ENCODE measurements at regions of chr12 and their contacts with region 1.

Region 1: GRCh38 chr12:111029732-111030131 is 109.4 kb upstream of the MYL2 start:
- DNase-seq: no peak
- ATAC-seq: no peak
- H3K4me3 ChIP-seq: no peak overlapping the region
- H3K27ac ChIP-seq: no peak overlapping the region
- H3K4me1 ChIP-seq: peaks cover 0 to 7% (median 6%) of the 10 kb centered on the region in 9 donors
- H3K27me3 ChIP-seq: peaks cover 9 to 92% (median 83%) of the 10 kb centered on the region in 7 donors
- CTCF ChIP-seq: no peak

Region 2: DNA sequence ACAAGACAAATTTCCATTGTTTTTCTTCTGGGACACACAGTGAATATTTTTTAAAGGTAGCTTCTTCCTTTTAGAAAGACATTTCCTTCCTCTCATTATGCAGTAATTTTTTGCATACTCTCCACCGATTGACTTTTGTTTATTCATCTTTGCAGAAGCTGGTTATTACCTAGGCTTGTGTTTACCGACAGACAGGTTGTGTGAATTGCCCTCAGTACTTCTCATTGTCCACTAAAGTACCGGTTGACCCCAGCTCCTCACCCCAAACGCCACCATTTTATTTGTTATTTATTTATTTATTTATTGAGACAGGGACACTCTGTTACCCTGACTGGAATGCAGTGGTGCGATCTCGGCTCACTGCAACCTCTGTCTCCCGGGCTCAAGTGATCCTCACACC is 45.9 kb before region 1 on chr12:
- intact Hi-C with region 1: no loop called
- DNase-seq: no peak
- ATAC-seq: no peak
- H3K4me3 ChIP-seq: no peak overlapping the region
- H3K27ac ChIP-seq: no peak overlapping the region
- H3K4me1 ChIP-seq: no peaks in the 10 kb centered on the region
- H3K27me3 ChIP-seq: peaks cover 0 to 7% (median 0%) of the 10 kb centered on the region in 7 donors
- CTCF ChIP-seq: no peak

Region 3: GRCh38 chr12:111298582-111299436 is 269.1 kb after region 1 on chr12:
- intact Hi-C with region 1: loop called in 9 of 10 experiments (anchors 2 to 10 kb)
- DNase-seq: peak; percentile 23 to 35
- ATAC-seq: peak; percentile 45 to 84 (median 68)
- H3K4me3 ChIP-seq: no peak overlapping the region
- H3K27ac ChIP-seq: no peak overlapping the region
- H3K4me1 ChIP-seq: no peaks in the 10 kb centered on the region
- H3K27me3 ChIP-seq: peaks cover 0 to 5% (median 0%) of the 10 kb centered on the region in 7 donors
- CTCF ChIP-seq: peak; percentile 62 to 91 (median 80)

Measured in heart right ventricle (tissue), 16 donors.